ENCODE measurements at regions of chr11 and their contacts with region 1.

Region 1: DNA sequence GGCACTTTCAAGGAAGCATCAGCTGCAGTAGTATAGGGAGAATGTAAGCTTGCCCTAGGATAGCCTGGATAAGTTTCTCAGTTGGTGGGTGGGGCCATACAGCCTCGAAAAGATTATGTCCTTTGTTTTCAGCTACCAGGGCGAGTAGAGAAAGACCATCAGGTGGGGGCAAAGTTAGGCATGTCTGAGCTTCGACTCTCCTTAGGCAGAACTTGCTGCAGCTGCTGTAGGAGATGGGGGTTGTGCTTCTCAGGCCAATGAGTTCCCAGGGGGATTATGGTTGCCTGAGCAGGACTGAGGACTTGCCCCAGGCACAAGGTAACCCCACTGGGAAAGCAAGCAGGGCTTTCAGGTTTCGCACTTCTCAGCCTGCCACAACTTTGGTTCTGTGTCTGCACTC is 173.3 kb upstream of the SESN3 start:
- DNase-seq: no peak
- H3K4me3 ChIP-seq: no peak overlapping the region
- H3K27ac ChIP-seq: no peak overlapping the region
- H3K4me1 ChIP-seq: no peaks in the 10 kb centered on the region
- H3K27me3 ChIP-seq: no peaks in the 10 kb centered on the region

Region 2: DNA sequence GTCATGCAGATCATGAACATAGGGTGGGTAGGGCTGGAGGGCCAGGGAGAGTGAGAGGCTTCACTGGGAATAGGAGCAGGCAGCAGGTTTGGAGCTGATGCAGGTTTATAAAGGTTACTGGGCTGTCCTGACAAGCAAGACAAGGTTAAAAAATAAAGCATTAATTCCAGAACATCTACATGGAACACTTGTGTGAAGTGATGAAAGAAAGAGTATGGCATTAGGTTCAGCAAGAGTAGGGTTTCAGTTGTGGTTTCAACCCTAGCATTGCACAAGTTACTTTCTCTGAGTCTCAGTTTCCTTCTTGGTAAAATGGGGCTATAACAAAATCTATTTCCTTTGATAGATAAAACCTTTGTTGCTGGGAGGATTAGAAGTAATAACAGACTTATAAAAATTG is 58.7 kb before region 1 on chr11:
- in situ Hi-C with region 1: loop called (anchors 10 kb)
- DNase-seq: no peak
- H3K4me3 ChIP-seq: no peak overlapping the region
- H3K27ac ChIP-seq: no peak overlapping the region
- H3K4me1 ChIP-seq: no peaks in the 10 kb centered on the region
- H3K27me3 ChIP-seq: no peaks in the 10 kb centered on the region

Region 3: DNA sequence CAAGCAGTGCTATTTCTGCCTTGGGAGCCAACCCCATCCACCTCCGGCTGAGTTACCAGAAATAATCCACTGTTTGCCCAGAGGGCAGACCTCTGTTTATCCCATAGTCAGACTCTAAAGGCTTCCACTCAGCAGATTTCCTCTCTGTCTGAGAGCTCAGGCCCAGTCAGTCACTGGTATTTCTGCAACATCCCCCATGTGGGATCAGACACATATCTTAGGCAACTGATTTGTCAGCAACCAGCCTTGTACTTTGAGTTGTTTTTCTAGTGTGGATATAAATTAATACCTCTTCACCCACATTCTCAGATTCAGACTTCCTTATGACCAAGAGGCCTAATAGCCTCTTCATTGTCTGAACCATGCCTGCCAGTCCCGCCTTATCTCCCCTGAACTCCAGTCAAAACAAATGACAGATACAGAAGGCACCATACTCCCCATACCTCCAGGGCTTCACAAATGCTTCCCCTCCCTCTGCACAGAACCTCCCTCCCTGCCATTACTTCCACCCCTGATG is 191.7 kb after region 1 on chr11:
- in situ Hi-C with region 1: no loop called
- DNase-seq: peak; percentile 73
- H3K4me3 ChIP-seq: no peak overlapping the region
- H3K27ac ChIP-seq: peak overlapping the region; percentile 61
- H3K4me1 ChIP-seq: peaks cover 20% of the 10 kb centered on the region
- H3K27me3 ChIP-seq: no peaks in the 10 kb centered on the region

Measured in GM23248 (cell line).